Naive thymus-derived CD4-positive, alpha-beta T cell (primary cell): ENCODE measurements at regions of chr5 and their contacts with region 1.

Region 1: GRCh38 chr5:134370871-134371833 is at the start of gene UBE2B:
- DNase-seq: peak; percentile 96 to 99 (median 98)
- ATAC-seq: peak; percentile 86
- H3K4me3 ChIP-seq: peak within 1 kb of the TSS; percentile 94
- H3K4me3 Mint-ChIP-seq: peak within 1 kb of the TSS; percentile 82 to 99 (median 96)
- H3K27ac ChIP-seq: peak within 1 kb of the TSS; percentile 100
- H3K27ac Mint-ChIP-seq: peak within 1 kb of the TSS; percentile 97 to 100 (median 100)
- H3K4me1 ChIP-seq: peaks cover 25 to 38% of the 10 kb centered on the region in 2 donors
- H3K4me1 Mint-ChIP-seq: peaks cover 30 to 76% (median 60%) of the 10 kb centered on the region in 7 donors
- H3K27me3 ChIP-seq: no peaks in the 10 kb centered on the region
- H3K27me3 Mint-ChIP-seq: peaks cover 0 to 8% (median 0%) of the 10 kb centered on the region in 5 donors
- total RNA-seq, gene UBE2B: 91.4 to 141 (median 124) TPM

Region 2: DNA sequence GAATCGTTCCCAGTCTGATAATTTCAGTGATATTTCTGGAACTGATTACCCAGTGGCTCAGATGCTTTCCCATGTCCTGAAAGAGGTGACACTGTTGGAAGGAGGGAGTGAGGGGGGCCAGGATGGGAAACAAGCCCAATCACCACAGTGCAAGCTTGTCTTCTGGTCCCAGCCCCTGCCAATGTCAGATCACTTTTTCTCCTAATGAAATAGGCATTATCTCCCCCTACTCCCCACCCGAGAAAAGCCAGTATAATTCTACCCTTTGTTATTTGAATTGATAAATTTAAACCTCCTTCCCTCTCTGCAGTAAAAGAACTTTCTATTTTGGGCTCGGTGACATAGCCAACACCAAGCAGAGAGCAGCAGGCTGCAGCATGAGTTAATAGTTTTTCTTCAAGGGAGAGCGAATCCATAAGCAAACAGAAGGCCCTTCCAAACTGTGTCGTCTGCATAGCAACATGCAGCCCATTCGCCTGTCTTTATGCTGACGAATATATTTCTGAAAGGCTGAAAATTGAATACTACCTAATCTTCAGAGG is 130.7 kb before region 1 on chr5:
- CTCF ChIA-PET with region 1: no interaction called
- POLR2A ChIA-PET with region 1: no interaction called
- intact Hi-C with region 1: no loop called
- DNase-seq: no peak
- ATAC-seq: no peak
- H3K4me3 ChIP-seq: no peak overlapping the region
- H3K4me3 Mint-ChIP-seq: no peak overlapping the region
- H3K27ac ChIP-seq: no peak overlapping the region
- H3K27ac Mint-ChIP-seq: no peak overlapping the region
- H3K4me1 ChIP-seq: no peaks in the 10 kb centered on the region
- H3K4me1 Mint-ChIP-seq: no peaks in the 10 kb centered on the region
- H3K27me3 ChIP-seq: no peaks in the 10 kb centered on the region
- H3K27me3 Mint-ChIP-seq: peaks cover 0 to 29% (median 0%) of the 10 kb centered on the region in 5 donors

Region 3: DNA sequence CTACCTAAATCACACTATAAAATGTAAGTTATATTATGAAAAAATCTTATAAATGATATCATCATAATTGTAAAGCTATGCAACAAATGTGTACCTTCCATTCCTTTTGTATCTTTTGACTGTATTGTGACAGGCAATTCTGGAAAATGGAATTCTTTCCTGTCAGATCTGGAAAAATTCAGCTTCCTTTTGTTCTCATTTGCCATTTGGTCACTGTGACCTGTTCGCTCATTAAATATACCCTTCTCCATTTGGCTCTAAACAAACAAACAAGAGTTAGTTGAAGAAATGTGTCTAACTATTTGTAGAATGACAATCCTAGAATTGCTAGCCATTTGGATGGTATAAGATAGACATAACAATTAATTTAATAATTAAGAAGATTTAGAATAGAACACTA is 66.8 kb before region 1 on chr5:
- CTCF ChIA-PET with region 1: interaction called, 4 read pairs
- POLR2A ChIA-PET with region 1: interaction called, 3 read pairs
- intact Hi-C with region 1: loop called (anchors 5 kb)
- DNase-seq: no peak
- ATAC-seq: no peak
- H3K4me3 ChIP-seq: no peak overlapping the region
- H3K4me3 Mint-ChIP-seq: no peak overlapping the region
- H3K27ac ChIP-seq: no peak overlapping the region
- H3K27ac Mint-ChIP-seq: no peak overlapping the region
- H3K4me1 ChIP-seq: no peaks in the 10 kb centered on the region
- H3K4me1 Mint-ChIP-seq: peaks cover 0 to 5% (median 0%) of the 10 kb centered on the region in 7 donors
- H3K27me3 ChIP-seq: no peaks in the 10 kb centered on the region
- H3K27me3 Mint-ChIP-seq: peaks cover 0 to 8% (median 0%) of the 10 kb centered on the region in 5 donors

Region 4: GRCh38 chr5:134555890-134556311 is 184.7 kb after region 1 on chr5:
- CTCF ChIA-PET with region 1: no interaction called
- POLR2A ChIA-PET with region 1: interaction called, 3 read pairs
- intact Hi-C with region 1: loop called in 1 of 2 experiments (anchors 1 kb)
- DNase-seq: peak; percentile 43 to 88 (median 59)
- ATAC-seq: peak; percentile 94
- H3K4me3 ChIP-seq: no peak overlapping the region
- H3K4me3 Mint-ChIP-seq: peak overlapping the region; percentile 25 to 73 (median 56)
- H3K27ac ChIP-seq: peak overlapping the region; percentile 73
- H3K27ac Mint-ChIP-seq: peak overlapping the region; percentile 76 to 95 (median 89)
- H3K4me1 ChIP-seq: peaks cover 21 to 32% of the 10 kb centered on the region in 2 donors
- H3K4me1 Mint-ChIP-seq: peaks cover 25 to 57% (median 38%) of the 10 kb centered on the region in 7 donors
- H3K27me3 ChIP-seq: no peaks in the 10 kb centered on the region
- H3K27me3 Mint-ChIP-seq: no peaks in the 10 kb centered on the region

Region 5: DNA sequence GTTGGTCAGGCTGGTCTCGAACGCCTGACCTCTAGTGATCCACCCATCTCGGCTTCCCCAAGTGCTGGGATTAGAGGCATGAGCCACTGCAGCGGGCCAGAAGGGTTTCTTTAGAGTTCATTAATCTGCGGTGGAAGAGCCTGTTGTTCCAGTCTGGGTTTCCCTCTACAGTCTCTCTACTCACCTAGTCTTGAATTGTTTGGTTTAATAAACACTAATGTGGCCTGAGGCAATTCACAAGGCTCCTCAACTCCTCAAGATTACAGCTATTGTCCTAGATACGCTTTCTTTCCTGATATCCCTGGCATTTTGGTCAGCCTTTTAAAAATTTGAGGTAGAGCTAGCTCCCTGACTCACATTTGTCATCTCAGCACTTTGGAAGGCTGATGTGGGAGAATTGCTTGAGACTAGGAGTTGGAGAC is 266.0 kb after region 1 on chr5:
- CTCF ChIA-PET with region 1: no interaction called
- POLR2A ChIA-PET with region 1: no interaction called
- intact Hi-C with region 1: loop called (anchors 1 to 2 kb)
- DNase-seq: no peak
- ATAC-seq: no peak
- H3K4me3 ChIP-seq: no peak overlapping the region
- H3K4me3 Mint-ChIP-seq: no peak overlapping the region
- H3K27ac ChIP-seq: no peak overlapping the region
- H3K27ac Mint-ChIP-seq: no peak overlapping the region
- H3K4me1 ChIP-seq: no peaks in the 10 kb centered on the region
- H3K4me1 Mint-ChIP-seq: peaks cover 0 to 10% (median 4%) of the 10 kb centered on the region in 7 donors
- H3K27me3 ChIP-seq: no peaks in the 10 kb centered on the region
- H3K27me3 Mint-ChIP-seq: no peaks in the 10 kb centered on the region

Region 6: DNA sequence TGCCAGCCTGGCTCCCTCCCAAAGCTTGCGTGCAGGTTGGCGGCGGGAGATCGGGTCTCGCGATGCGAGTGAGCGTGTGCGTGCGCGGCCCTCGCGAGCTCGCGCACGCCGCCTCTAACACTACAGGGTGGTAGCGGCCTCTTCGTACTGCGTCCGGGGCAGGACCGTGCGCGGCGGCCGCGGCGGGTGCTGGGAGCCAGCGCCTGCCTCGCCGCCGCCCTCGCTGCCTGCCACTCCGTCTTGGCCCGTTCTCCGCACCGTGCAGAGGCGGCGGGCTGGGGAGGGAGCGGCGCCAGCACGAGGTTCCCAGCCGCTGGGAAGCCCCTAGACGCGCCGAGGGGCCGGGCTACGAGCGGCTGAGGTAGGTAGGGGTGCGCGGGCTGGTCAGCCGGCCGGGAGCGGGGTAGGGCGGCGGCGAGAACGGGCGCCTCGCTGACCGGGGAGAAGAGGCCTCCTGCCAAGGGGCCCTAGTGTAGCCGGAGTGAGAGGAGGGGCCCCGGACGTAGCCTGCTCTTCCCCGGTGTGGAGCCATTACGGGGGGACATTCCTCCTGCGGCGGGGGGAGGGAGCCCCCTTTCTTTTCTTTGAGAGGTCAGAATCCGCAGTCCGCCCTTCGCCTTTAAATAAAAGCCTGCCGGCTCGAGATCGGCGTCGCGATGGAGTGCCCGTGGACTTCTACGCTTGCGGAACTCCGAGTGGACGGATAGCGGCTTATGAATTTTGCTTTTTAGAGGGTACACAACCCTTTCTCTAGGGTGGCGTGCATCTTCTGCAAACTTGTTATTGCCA is 474.9 kb after region 1 on chr5 and contains the start of gene C5orf24:
- CTCF ChIA-PET with region 1: no interaction called
- POLR2A ChIA-PET with region 1: no interaction called
- intact Hi-C with region 1: loop called (anchors 1 kb)
- DNase-seq: peak; percentile 83 to 93 (median 90)
- ATAC-seq: peak; percentile 98
- H3K4me3 ChIP-seq: peak within 1 kb of the TSS; percentile 60
- H3K4me3 Mint-ChIP-seq: peak within 1 kb of the TSS; percentile 84 to 99 (median 94)
- H3K27ac ChIP-seq: peak within 1 kb of the TSS; percentile 96
- H3K27ac Mint-ChIP-seq: peak within 1 kb of the TSS; percentile 94 to 99 (median 97)
- H3K4me1 ChIP-seq: peaks cover 16 to 19% of the 10 kb centered on the region in 2 donors
- H3K4me1 Mint-ChIP-seq: peaks cover 12 to 42% (median 31%) of the 10 kb centered on the region in 7 donors
- H3K27me3 ChIP-seq: no peaks in the 10 kb centered on the region
- H3K27me3 Mint-ChIP-seq: no peaks in the 10 kb centered on the region
- total RNA-seq, gene C5orf24: 20.3 to 42.7 (median 37.9) TPM